ENCODE measurements at regions of chr5 and their contacts with region 1.

Region 1: GRCh38 chr5:54517174-54518092 is at the start of gene SNX18:
- DNase-seq: no peak
- H3K4me3 ChIP-seq: peak within 1 kb of the TSS; percentile 78 to 93
- H3K27ac ChIP-seq: peak within 1 kb of the TSS; percentile 96
- H3K4me1 ChIP-seq: peaks cover 30% of the 10 kb centered on the region
- H3K27me3 ChIP-seq: no peaks in the 10 kb centered on the region
- CTCF ChIP-seq: peak; percentile 90 to 98 (median 97)
- POLR2A ChIP-seq: peak in 1 of 2 donors; percentile 78
- total RNA-seq, gene SNX18: 63.1 TPM

Region 2: GRCh38 chr5:54217826-54218503 is 299.5 kb before region 1 on chr5:
- intact Hi-C with region 1: no loop called
- DNase-seq: no peak
- H3K4me3 ChIP-seq: no peak overlapping the region
- H3K27ac ChIP-seq: no peak overlapping the region
- H3K4me1 ChIP-seq: peaks cover 9% of the 10 kb centered on the region
- H3K27me3 ChIP-seq: no peaks in the 10 kb centered on the region
- CTCF ChIP-seq: peak; percentile 13 to 80 (median 41)
- POLR2A ChIP-seq: no peak

Region 3: GRCh38 chr5:54637654-54638053 is 120.2 kb after region 1 on chr5:
- intact Hi-C with region 1: loop called (anchors 10 kb)
- DNase-seq: no peak
- H3K4me3 ChIP-seq: no peak overlapping the region
- H3K27ac ChIP-seq: no peak overlapping the region
- H3K4me1 ChIP-seq: peaks cover under 1% of the 10 kb centered on the region
- H3K27me3 ChIP-seq: no peaks in the 10 kb centered on the region
- CTCF ChIP-seq: no peak
- POLR2A ChIP-seq: no peak

Region 4: DNA sequence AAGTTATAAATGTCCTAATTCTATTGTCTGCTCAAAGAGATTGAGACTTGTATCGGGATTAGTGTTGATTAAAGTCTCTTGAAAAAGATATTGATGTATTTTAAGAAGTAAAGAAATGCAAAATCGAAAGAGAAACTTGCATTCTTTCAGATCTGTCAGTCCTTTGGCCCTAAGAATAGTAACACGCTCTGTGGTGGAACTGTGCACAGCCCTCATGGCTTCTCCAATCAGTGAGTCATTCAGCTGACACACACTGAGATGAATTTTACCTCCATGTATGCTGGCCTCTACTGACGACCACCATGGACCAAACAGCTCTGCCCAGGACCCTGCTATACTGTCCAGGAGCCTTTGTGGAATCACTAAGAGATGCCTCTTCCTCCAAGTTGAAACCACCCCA is 235.6 kb after region 1 on chr5:
- intact Hi-C with region 1: loop called (anchors 10 kb)
- DNase-seq: peak in 1 of 2 donors; percentile 55
- H3K4me3 ChIP-seq: no peak overlapping the region
- H3K27ac ChIP-seq: no peak overlapping the region
- H3K4me1 ChIP-seq: no peaks in the 10 kb centered on the region
- H3K27me3 ChIP-seq: no peaks in the 10 kb centered on the region
- CTCF ChIP-seq: no peak
- POLR2A ChIP-seq: no peak

Region 5: GRCh38 chr5:54844905-54845566 is 327.6 kb after region 1 on chr5:
- intact Hi-C with region 1: loop called (anchors 2 kb)
- DNase-seq: no peak
- H3K4me3 ChIP-seq: no peak overlapping the region
- H3K27ac ChIP-seq: peak overlapping the region; percentile 10
- H3K4me1 ChIP-seq: no peaks in the 10 kb centered on the region
- H3K27me3 ChIP-seq: no peaks in the 10 kb centered on the region
- CTCF ChIP-seq: peak; percentile 41 to 70 (median 49)
- POLR2A ChIP-seq: no peak

Region 6: DNA sequence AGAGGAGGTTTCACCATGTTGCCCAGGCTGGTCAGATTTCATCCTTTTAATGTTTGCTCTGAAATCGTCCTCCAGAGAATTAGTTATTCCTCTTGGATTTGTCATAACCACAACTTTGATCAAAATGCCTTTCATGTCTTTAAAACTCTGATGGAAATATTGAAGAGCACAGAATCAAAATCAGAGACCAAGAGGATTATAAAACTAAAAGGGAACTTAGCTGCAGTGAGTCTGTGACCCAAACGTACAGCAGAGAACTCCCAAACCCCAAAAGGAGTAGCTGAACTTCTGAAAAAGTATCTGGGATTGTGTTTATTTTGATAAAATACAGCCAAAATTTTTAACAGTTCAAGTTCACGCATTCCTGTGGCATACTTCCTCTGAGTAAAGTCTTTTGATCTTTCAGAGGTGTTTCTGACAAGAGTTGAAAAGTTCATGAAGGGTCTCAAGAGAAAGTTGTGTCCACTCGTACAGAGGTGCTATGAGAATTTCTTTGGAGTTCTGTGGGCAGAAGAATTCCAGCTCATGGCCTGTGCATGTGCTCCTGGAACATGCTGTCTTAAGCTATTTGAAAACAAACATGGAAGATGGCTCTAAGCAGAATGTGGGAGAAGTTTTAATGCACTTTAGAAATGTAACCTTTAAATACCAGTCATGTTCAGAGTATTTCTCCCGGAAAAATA is 343.9 kb after region 1 on chr5:
- intact Hi-C with region 1: loop called (anchors 5 kb)
- DNase-seq: no peak
- H3K4me3 ChIP-seq: no peak overlapping the region
- H3K27ac ChIP-seq: no peak overlapping the region
- H3K4me1 ChIP-seq: no peaks in the 10 kb centered on the region
- H3K27me3 ChIP-seq: no peaks in the 10 kb centered on the region
- CTCF ChIP-seq: no peak
- POLR2A ChIP-seq: no peak

Measured in vagina (tissue), 2 donors.